Calu3 (cell line): ENCODE measurements at regions of chr1 and their contacts with region 1.

Region 1: DNA sequence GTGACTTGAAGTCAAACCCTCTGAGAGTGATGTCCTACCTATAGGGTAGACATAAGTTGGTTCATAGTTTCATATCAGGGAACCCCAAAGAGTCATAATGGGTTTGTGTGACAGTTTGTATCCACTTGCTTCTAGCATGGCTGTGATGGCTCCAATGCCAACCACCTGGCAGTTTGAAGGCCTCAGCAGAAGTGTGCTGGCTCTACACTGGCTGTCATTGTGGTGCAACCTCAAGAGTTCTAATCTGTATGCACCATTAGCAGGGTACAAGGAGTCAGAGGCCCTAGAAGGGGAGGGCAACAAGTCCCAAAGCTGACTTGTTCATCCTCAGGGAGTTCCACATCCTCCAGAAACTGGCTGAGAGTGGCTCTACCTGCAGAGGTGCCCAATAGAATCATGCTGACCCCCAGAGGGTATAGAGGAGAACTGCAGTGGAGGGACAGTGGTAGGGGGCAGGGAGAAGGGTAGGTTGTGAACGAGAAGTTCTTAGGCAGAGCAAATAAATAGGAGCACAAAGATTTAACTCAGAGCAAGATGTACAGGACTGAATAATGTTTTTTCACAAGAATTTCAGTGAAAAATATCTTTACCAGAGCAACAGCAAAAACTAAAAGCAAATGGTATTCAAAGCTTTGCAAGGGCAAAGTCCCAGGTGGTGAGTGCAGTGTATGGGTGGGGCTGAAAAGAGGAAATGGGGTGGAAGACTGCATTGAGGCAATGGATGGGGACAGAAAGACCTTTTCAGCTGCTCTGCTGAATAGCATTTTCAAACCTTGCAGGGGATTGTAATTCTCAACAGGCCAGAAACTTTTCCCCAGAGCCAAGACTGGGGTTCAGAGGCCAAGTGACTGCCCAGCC is 3.2 kb downstream of the FCRL2 start:
- DNase-seq: peak; percentile 70
- H3K4me3 Mint-ChIP-seq: peak overlapping the region; percentile 31
- H3K27ac Mint-ChIP-seq: peak overlapping the region; percentile 10
- H3K4me1 Mint-ChIP-seq: peaks cover 66% of the 10 kb centered on the region
- H3K27me3 Mint-ChIP-seq: no peaks in the 10 kb centered on the region
- CTCF ChIP-seq: peak; percentile 84

Region 2: GRCh38 chr1:156797212-156797871 is 976.4 kb before region 1 on chr1:
- CTCF ChIA-PET with region 1: no interaction called
- intact Hi-C with region 1: no loop called
- DNase-seq: peak; percentile 69
- H3K4me3 Mint-ChIP-seq: no peak overlapping the region
- H3K27ac Mint-ChIP-seq: no peak overlapping the region
- H3K4me1 Mint-ChIP-seq: no peaks in the 10 kb centered on the region
- H3K27me3 Mint-ChIP-seq: no peaks in the 10 kb centered on the region
- CTCF ChIP-seq: peak; percentile 81

Region 3: GRCh38 chr1:157369808-157370521 is 403.8 kb before region 1 on chr1:
- CTCF ChIA-PET with region 1: no interaction called
- intact Hi-C with region 1: loop called (anchors 5 kb)
- DNase-seq: peak; percentile 74
- H3K4me3 Mint-ChIP-seq: no peak overlapping the region
- H3K27ac Mint-ChIP-seq: no peak overlapping the region
- H3K4me1 Mint-ChIP-seq: no peaks in the 10 kb centered on the region
- H3K27me3 Mint-ChIP-seq: peaks cover 11% of the 10 kb centered on the region
- CTCF ChIP-seq: peak; percentile 91

Region 4: DNA sequence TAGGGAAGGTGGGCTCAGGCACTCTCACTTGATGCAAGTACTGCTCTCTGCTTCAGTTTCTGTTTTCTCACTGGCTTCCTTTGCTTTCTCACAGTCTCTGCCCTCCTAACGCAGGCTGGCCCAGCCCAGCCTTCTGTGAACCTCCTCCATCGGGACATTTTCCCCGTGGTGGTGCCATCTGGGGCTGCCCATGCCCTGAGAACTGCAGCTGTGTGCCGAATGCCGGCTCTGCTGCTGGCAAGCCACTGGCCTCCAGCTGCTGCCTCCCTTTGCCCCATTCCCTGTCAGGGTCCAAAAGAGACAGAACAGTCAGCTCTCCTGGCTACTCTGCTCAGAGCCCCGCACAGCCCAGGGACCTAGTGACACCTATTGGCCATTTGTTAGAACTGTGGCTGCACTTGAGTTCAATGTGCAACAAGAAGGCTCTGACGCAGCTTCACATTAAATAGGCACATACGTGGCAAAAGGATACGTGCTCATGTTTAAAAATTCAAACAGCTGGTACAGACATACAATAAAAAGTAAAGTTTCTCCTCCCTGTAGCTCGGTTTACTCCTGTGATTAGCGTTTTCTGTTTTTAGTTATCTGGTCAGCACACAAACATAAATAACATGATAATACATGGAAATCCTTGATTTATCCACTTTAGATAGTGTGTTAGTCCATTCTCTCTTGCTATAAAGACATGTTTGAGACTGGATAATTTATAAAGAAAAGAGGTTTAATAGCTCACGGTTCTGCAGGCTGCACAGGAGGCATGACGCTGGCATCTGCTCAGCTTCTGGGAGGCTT is 268.0 kb before region 1 on chr1:
- CTCF ChIA-PET with region 1: no interaction called
- intact Hi-C with region 1: loop called (anchors 5 kb)
- DNase-seq: peak; percentile 71
- H3K4me3 Mint-ChIP-seq: peak overlapping the region; percentile 62
- H3K27ac Mint-ChIP-seq: no peak overlapping the region
- H3K4me1 Mint-ChIP-seq: peaks cover 11% of the 10 kb centered on the region
- H3K27me3 Mint-ChIP-seq: peaks cover 17% of the 10 kb centered on the region
- CTCF ChIP-seq: peak; percentile 76

Region 5: DNA sequence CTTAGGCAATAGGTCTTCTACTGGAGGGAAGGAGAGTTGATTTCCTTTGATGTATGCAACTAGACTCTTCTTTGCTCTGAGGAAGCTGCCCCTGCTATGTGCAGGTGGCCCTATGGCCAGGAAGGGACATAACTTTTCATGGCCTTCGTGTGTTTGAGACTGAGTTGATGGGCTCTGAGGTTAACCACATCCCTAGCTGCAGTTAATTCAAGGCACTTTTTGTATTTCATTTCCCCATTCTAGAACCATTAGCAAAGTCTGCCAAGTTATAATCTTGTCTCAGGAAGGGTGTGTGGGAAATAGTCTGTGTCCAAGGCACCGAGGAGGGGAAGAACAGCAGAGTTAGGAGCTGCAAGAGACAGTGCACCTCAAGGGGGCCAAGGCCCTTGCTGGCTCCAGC is 178.4 kb before region 1 on chr1:
- CTCF ChIA-PET with region 1: no interaction called
- intact Hi-C with region 1: loop called (anchors 5 kb)
- DNase-seq: no peak
- H3K4me3 Mint-ChIP-seq: no peak overlapping the region
- H3K27ac Mint-ChIP-seq: no peak overlapping the region
- H3K4me1 Mint-ChIP-seq: peaks cover 33% of the 10 kb centered on the region
- H3K27me3 Mint-ChIP-seq: no peaks in the 10 kb centered on the region
- CTCF ChIP-seq: no peak

Region 6: DNA sequence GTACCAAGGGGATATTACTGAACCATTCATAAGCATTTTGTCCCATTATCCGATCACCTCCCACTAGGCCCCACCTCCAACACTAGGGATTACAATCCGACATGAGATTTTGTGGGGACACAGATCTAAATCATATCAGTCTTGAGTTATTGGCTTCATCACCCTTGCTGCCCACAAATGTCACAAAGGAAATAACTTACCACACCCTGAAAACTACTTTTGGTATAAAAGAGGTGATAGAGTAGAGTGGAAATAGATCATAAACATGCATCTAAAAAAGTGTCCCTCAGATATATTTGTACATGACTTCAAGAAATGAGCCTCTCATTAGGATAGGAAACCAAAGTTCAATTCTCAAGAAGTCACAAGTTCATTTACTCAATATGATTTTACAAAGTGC is 50.6 kb before region 1 on chr1:
- CTCF ChIA-PET with region 1: no interaction called
- intact Hi-C with region 1: no loop called
- DNase-seq: no peak
- H3K4me3 Mint-ChIP-seq: no peak overlapping the region
- H3K27ac Mint-ChIP-seq: no peak overlapping the region
- H3K4me1 Mint-ChIP-seq: no peaks in the 10 kb centered on the region
- H3K27me3 Mint-ChIP-seq: no peaks in the 10 kb centered on the region
- CTCF ChIP-seq: no peak

Region 7: GRCh38 chr1:157852476-157852875 is 78.8 kb after region 1 on chr1:
- CTCF ChIA-PET with region 1: no interaction called
- intact Hi-C with region 1: loop called (anchors 5 kb)
- DNase-seq: peak; percentile 25
- H3K4me3 Mint-ChIP-seq: no peak overlapping the region
- H3K27ac Mint-ChIP-seq: peak overlapping the region; percentile 50
- H3K4me1 Mint-ChIP-seq: peaks cover 15% of the 10 kb centered on the region
- H3K27me3 Mint-ChIP-seq: no peaks in the 10 kb centered on the region
- CTCF ChIP-seq: no peak

Region 8: DNA sequence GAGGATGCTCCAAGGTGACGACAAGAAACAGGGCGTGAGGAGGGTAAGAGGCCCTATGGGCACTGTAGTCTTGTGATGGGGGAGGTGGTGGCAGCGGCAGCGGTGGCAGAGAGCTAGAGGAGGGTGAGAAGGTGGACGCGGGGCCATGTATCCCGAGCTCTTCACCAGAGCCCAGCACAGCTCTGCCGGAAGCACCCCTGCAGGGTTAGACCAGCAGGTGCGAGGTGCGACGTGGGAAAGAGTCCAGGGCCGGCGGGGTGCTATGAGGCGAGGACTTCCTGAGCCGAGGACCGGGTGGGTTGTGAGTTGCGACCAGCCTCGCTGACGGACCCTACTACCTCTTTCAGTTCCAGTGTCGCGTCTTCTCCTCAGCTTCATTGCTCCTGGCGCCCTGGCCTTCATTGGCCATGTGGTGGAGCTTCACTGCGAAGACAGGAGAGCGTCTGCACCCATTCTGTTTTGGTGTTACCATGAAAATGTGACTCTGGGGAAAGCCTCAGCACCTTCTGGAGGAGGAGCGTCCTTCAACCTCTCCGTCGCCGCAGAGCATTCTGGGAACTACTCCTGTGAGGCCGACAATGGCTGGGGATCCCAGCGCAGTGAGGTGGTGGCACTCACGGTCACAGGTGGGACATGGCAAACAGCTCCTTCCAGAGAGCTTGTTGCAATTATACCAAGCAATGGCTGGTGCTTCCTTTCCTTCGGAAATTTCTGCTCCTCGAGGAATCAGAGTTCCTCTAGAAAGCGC is 151.9 kb after region 1 on chr1:
- CTCF ChIA-PET with region 1: no interaction called
- intact Hi-C with region 1: no loop called
- DNase-seq: no peak
- H3K4me3 Mint-ChIP-seq: no peak overlapping the region
- H3K27ac Mint-ChIP-seq: no peak overlapping the region
- H3K4me1 Mint-ChIP-seq: no peaks in the 10 kb centered on the region
- H3K27me3 Mint-ChIP-seq: peaks cover 7% of the 10 kb centered on the region
- CTCF ChIP-seq: no peak

Region 9: GRCh38 chr1:157992031-157992832 is 218.5 kb after region 1 on chr1:
- CTCF ChIA-PET with region 1: no interaction called
- intact Hi-C with region 1: no loop called
- DNase-seq: peak; percentile 83
- H3K4me3 Mint-ChIP-seq: peak overlapping the region; percentile 93
- H3K27ac Mint-ChIP-seq: peak overlapping the region; percentile 29
- H3K4me1 Mint-ChIP-seq: peaks cover 36% of the 10 kb centered on the region
- H3K27me3 Mint-ChIP-seq: peaks cover 23% of the 10 kb centered on the region
- CTCF ChIP-seq: peak; percentile 92